ENCODE measurements at regions of chr15 and their contacts with region 1.

Region 1: DNA sequence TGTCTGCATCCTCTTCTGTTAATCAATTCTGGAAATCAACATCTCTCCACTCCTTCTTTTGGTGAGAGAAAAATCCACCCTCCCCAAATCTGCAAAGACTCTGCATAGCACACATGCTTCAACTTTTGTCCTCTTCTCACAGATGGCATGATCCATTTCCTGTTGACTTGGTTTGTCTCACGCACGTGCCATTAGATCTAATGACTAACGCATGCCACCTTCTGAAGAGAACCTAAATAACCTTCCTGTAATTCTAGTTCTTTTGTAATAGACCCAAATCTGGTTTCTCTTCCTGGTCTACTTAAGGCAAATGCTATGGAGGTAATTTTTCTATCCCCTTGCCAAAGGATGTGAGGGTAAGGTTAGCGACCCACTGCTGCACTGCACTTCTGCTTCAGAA is 51.0 kb upstream of the ATOSA start:
- DNase-seq: peak in 9 of 10 donors; percentile 5 to 77 (median 44)
- ATAC-seq: peak; percentile 98 to 99
- H3K4me3 Mint-ChIP-seq: peak overlapping the region in 6 of 10 donors; percentile 1 to 55 (median 32)
- H3K27ac Mint-ChIP-seq: peak overlapping the region; percentile 32 to 93 (median 82)
- H3K4me1 Mint-ChIP-seq: peaks cover 8 to 26% (median 15%) of the 10 kb centered on the region in 4 donors
- H3K27me3 Mint-ChIP-seq: peaks cover 0 to 9% (median 0%) of the 10 kb centered on the region in 5 donors

Region 2: GRCh38 chr15:52679232-52680040 is 50.7 kb before region 1 on chr15 and contains the start of gene ATOSA:
- POLR2A ChIA-PET with region 1: interaction called, 23 read pairs
- DNase-seq: peak; percentile 85 to 95 (median 92)
- ATAC-seq: peak; percentile 75 to 79
- H3K4me3 Mint-ChIP-seq: peak within 1 kb of the TSS; percentile 95 to 100 (median 97)
- H3K27ac Mint-ChIP-seq: peak within 1 kb of the TSS; percentile 95 to 100 (median 99)
- H3K4me1 Mint-ChIP-seq: peaks cover 15 to 83% (median 50%) of the 10 kb centered on the region in 4 donors
- H3K27me3 Mint-ChIP-seq: no peaks in the 10 kb centered on the region
- polyA plus RNA-seq, gene ATOSA: 9.0 to 13.1 (median 9.6) TPM